Calu3 (cell line): ENCODE measurements at regions of chr14 and their contacts with region 1.

Region 1: GRCh38 chr14:95534299-95535225 is at the start of gene GLRX5:
- DNase-seq: peak; percentile 97
- H3K4me3 Mint-ChIP-seq: peak within 1 kb of the TSS; percentile 82
- H3K27ac Mint-ChIP-seq: peak within 1 kb of the TSS; percentile 97
- H3K4me1 Mint-ChIP-seq: peaks cover 53% of the 10 kb centered on the region
- H3K27me3 Mint-ChIP-seq: no peaks in the 10 kb centered on the region
- CTCF ChIP-seq: no peak
- total RNA-seq, gene GLRX5: 54.8 and 58.0 TPM in 2 replicates

Region 2: DNA sequence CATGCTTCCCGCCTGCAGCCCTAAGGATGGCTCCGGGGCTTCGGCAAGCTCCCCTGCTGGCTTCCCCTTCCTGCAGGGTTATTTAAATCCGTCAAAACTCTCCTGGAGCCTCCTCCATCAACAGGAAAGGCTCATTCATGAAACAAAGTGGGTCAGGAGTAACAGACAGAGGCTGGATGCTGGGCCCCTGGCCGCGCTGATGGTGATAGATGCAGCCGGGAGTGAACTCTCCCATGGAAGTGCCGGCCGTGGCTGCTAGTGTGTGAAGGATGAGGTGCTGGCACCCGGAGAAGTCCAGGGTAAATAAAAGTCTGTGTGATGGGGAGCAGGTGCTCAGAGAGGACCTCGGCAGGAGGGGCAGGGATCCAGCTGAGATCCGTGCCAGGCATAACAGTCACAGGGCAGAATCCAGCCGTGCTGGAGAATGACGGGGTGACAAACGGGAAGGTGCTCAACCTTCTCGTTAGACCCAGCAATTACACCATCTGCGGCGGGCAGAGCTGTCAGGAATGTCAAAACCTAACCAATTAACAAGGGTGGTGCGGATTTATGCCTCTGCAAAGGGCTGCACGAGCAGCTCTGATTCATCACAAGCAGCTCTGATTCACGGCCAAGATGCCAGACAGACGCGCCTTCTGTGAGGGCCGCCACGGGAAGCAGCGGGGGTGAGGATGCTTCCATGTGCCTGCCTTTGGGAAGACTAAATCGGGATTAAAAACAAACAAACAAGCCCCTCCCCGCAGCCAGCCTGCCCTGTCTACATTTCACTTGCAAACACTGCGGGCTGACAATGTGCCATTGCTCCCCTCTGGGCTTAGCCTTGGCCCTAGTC is 73.7 kb before region 1 on chr14:
- CTCF ChIA-PET with region 1: no interaction called
- intact Hi-C with region 1: loop called (anchors 2 kb)
- DNase-seq: peak; percentile 40
- H3K4me3 Mint-ChIP-seq: peak overlapping the region; percentile 47
- H3K27ac Mint-ChIP-seq: peak overlapping the region; percentile 27
- H3K4me1 Mint-ChIP-seq: peaks cover 9% of the 10 kb centered on the region
- H3K27me3 Mint-ChIP-seq: no peaks in the 10 kb centered on the region
- CTCF ChIP-seq: no peak